CD8-positive, alpha-beta memory T cell (primary cell): ENCODE measurements at regions of chr20 and their contacts with region 1.

Region 1: GRCh38 chr20:45044084-45044573 is 56.8 kb downstream of the KCNS1 start:
- DNase-seq: peak; percentile 9 to 62 (median 47)
- H3K4me3 ChIP-seq: no peak overlapping the region
- H3K4me3 Mint-ChIP-seq: no peak overlapping the region
- H3K27ac ChIP-seq: no peak overlapping the region
- H3K27ac Mint-ChIP-seq: peak overlapping the region; percentile 11 to 96 (median 53)
- H3K4me1 ChIP-seq: peaks cover 39% of the 10 kb centered on the region
- H3K4me1 Mint-ChIP-seq: peaks cover 67 to 84% (median 84%) of the 10 kb centered on the region in 3 donors
- H3K27me3 ChIP-seq: no peaks in the 10 kb centered on the region
- H3K27me3 Mint-ChIP-seq: no peaks in the 10 kb centered on the region

Region 2: GRCh38 chr20:44780226-44780625 is 263.9 kb before region 1 on chr20:
- CTCF ChIA-PET with region 1: no interaction called
- POLR2A ChIA-PET with region 1: no interaction called
- DNase-seq: peak in 1 of 5 donors; percentile 6
- H3K4me3 ChIP-seq: no peak overlapping the region
- H3K4me3 Mint-ChIP-seq: no peak overlapping the region
- H3K27ac ChIP-seq: no peak overlapping the region
- H3K27ac Mint-ChIP-seq: no peak overlapping the region
- H3K4me1 ChIP-seq: no peaks in the 10 kb centered on the region
- H3K4me1 Mint-ChIP-seq: no peaks in the 10 kb centered on the region
- H3K27me3 ChIP-seq: no peaks in the 10 kb centered on the region
- H3K27me3 Mint-ChIP-seq: peaks cover 14 to 38% of the 10 kb centered on the region in 2 donors

Region 3: DNA sequence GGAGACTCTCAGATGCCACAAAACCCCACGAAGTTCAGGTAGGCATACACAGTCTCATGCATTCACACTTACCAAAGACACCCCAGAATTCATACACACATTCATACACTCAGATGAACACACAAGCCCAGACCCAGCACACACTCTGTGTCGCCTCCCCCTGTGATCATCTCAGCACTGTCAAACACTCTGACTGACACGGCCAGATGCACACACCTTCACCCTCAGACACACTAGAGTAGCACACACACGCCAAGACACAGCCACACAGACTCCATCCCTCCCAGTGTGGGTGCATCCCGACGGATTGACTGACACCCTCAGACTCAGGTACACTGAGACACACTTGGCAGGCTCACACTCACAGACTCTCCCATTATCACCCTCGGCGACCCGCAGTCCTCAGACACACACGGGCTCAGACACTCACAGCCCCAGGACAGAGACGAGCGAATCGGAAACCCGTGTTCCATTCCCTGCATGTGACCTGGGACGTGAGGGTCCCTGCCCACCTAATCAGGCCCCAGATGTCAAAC is 232.9 kb before region 1 on chr20:
- CTCF ChIA-PET with region 1: no interaction called
- POLR2A ChIA-PET with region 1: no interaction called
- DNase-seq: no peak
- H3K4me3 ChIP-seq: no peak overlapping the region
- H3K4me3 Mint-ChIP-seq: peak overlapping the region in 6 of 7 donors; percentile 24 to 79 (median 51)
- H3K27ac ChIP-seq: no peak overlapping the region
- H3K27ac Mint-ChIP-seq: peak overlapping the region in 1 of 8 donors; percentile 33
- H3K4me1 ChIP-seq: no peaks in the 10 kb centered on the region
- H3K4me1 Mint-ChIP-seq: peaks cover 7 to 20% (median 13%) of the 10 kb centered on the region in 3 donors
- H3K27me3 ChIP-seq: peaks cover 39% of the 10 kb centered on the region
- H3K27me3 Mint-ChIP-seq: peaks cover 36 to 67% of the 10 kb centered on the region in 2 donors

Region 4: DNA sequence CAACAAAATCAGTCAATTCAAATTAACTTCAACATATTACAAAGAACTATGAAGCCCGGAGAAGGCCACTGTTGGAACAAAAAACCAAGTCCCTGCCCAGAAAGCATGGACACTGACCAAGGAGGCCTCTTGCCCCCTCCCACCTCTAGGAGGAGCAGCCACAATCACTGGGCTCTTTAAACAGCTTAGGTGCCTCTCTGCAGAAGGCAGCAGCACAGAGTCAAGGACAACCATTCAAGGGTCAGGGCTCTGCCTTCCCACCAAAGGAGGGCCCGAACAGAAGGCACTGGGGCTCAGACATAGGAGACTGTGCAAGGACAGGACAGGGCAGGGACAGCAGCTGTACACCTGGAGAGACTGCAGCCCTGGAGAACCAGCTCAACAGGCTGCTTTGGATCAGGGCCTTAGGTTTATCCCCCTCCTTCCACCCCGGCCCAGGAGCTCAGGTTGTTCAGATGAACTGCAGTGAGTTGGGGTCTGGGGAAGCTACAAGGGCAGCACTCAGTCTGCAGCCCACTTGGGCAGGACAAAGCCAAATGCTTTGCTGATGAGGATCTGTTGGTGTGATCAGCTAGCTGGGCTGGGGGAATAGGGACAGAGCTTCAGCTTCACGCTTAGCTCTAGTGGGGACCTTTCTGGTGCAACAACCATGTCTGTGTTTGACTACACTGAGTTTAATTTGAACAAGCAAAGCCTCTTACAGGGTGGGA is 101.7 kb before region 1 on chr20:
- CTCF ChIA-PET with region 1: no interaction called
- POLR2A ChIA-PET with region 1: no interaction called
- DNase-seq: no peak
- H3K4me3 ChIP-seq: no peak overlapping the region
- H3K4me3 Mint-ChIP-seq: no peak overlapping the region
- H3K27ac ChIP-seq: no peak overlapping the region
- H3K27ac Mint-ChIP-seq: peak overlapping the region in 5 of 8 donors; percentile 5 to 92 (median 47)
- H3K4me1 ChIP-seq: no peaks in the 10 kb centered on the region
- H3K4me1 Mint-ChIP-seq: peaks cover 0 to 4% (median 0%) of the 10 kb centered on the region in 3 donors
- H3K27me3 ChIP-seq: no peaks in the 10 kb centered on the region
- H3K27me3 Mint-ChIP-seq: no peaks in the 10 kb centered on the region

Region 5: GRCh38 chr20:44990425-44990824 is 53.7 kb before region 1 on chr20:
- CTCF ChIA-PET with region 1: no interaction called
- POLR2A ChIA-PET with region 1: no interaction called
- DNase-seq: peak in 1 of 5 donors; percentile 44
- H3K4me3 ChIP-seq: peak overlapping the region; percentile 57
- H3K4me3 Mint-ChIP-seq: peak overlapping the region; percentile 78 to 86 (median 83)
- H3K27ac ChIP-seq: peak overlapping the region; percentile 14
- H3K27ac Mint-ChIP-seq: peak overlapping the region; percentile 65 to 98 (median 93)
- H3K4me1 ChIP-seq: peaks cover 68% of the 10 kb centered on the region
- H3K4me1 Mint-ChIP-seq: peaks cover 76 to 97% (median 86%) of the 10 kb centered on the region in 3 donors
- H3K27me3 ChIP-seq: no peaks in the 10 kb centered on the region
- H3K27me3 Mint-ChIP-seq: no peaks in the 10 kb centered on the region

Region 6: DNA sequence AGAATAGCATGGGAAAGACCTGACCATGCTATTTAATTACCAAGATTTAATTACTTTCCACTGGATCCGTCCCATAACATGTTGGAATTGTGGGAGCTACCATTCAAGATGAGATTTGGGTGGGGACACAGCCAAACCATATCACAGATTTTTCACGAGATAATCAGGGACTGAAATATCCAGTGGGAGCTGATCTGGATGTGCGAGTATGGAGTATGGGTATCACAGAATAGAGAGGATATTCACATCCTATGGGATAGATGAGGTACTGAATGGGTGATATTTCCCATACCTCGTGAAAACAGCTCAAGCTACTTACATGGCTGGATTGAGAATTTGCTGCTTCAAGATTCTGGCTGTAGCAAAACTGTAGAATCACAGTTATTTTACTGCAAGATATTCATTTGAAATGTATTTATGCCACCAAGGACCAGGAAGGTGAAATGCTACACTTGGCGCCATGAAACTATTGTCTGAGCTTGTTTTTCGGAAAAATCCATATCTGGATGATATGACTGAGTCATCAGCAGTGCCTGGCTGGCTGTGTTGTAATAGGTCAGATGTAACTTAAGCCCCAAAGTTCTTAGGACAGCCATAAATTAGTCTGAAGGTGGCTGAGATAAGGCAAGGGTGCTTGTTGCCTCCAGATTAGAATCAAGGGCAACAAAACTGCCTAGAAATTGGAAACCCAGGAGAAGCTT is 27.0 kb after region 1 on chr20:
- CTCF ChIA-PET with region 1: interaction called, 12 read pairs
- POLR2A ChIA-PET with region 1: no interaction called
- DNase-seq: no peak
- H3K4me3 ChIP-seq: no peak overlapping the region
- H3K4me3 Mint-ChIP-seq: peak overlapping the region in 2 of 7 donors; percentile 10 to 45
- H3K27ac ChIP-seq: no peak overlapping the region
- H3K27ac Mint-ChIP-seq: peak overlapping the region in 6 of 8 donors; percentile 22 to 69 (median 60)
- H3K4me1 ChIP-seq: peaks cover 32% of the 10 kb centered on the region
- H3K4me1 Mint-ChIP-seq: peaks cover 59 to 76% (median 70%) of the 10 kb centered on the region in 3 donors
- H3K27me3 ChIP-seq: no peaks in the 10 kb centered on the region
- H3K27me3 Mint-ChIP-seq: no peaks in the 10 kb centered on the region